ENCODE measurements at regions of chr1 and their contacts with region 1.

Region 1: GRCh38 chr1:89483010-89483756 is 41.4 kb upstream of the LRRC8B start:
- DNase-seq: peak; percentile 65
- H3K4me3 ChIP-seq: no peak overlapping the region
- H3K27ac ChIP-seq: no peak overlapping the region
- H3K4me1 ChIP-seq: peaks cover 0 to 5% of the 10 kb centered on the region in 2 experiments; a peak in 1 of 4 replicates
- H3K27me3 ChIP-seq: no peaks in the 10 kb centered on the region
- CTCF ChIP-seq: peak; percentile 82
- EP300 ChIP-seq: no peak
- RAD21 ChIP-seq: peak; percentile 88

Region 2: DNA sequence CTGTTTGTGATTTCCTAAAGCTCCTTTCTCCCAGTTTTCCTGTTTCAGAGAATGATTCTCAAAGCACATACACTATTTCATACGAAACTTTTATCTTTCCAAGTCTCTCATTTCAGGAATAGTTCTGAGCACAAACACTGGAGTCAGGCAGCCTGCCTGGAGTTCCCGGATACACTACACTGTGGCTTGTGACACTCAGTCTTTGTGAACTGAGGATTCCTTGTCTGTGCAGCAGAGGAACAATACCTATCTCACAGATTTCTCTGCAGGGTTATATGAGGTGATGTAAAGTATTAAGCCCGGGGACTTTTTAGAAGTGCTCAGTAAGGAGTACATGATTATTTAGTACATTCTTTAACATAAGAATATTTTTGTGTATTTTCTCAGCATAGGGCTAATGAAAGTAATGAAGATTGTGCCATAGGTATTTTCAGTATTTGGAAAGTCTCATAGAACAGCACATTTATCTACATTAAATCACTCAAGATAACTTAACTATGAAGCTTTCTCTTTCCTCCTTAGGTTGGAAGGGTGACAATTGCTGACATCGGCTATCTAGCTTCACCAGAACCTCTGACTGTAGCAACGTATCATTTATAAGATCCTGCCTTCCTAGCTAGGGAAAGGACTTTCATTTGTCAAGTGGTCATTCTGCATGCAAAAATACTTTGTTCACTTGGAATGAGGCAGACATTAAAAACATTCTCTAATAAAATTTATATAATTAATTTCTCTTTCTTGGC is 370.1 kb before region 1 on chr1:
- CTCF ChIA-PET with region 1: no interaction called
- POLR2A ChIA-PET with region 1: no interaction called
- DNase-seq: no peak
- H3K4me3 ChIP-seq: no peak overlapping the region
- H3K27ac ChIP-seq: no peak overlapping the region
- H3K4me1 ChIP-seq: no peaks in the 10 kb centered on the region
- H3K27me3 ChIP-seq: no peaks in the 10 kb centered on the region
- CTCF ChIP-seq: no peak
- EP300 ChIP-seq: no peak
- RAD21 ChIP-seq: no peak

Region 3: GRCh38 chr1:89149229-89149628 is 334.0 kb before region 1 on chr1:
- CTCF ChIA-PET with region 1: no interaction called
- POLR2A ChIA-PET with region 1: no interaction called
- DNase-seq: no peak
- H3K4me3 ChIP-seq: no peak overlapping the region
- H3K27ac ChIP-seq: no peak overlapping the region
- H3K4me1 ChIP-seq: peaks cover 0 to 3% of the 10 kb centered on the region in 2 experiments; a peak in 1 of 4 replicates
- H3K27me3 ChIP-seq: no peaks in the 10 kb centered on the region
- CTCF ChIP-seq: peak; percentile 35; the same call in 1 of the 2 replicates
- EP300 ChIP-seq: no peak
- RAD21 ChIP-seq: peak; percentile 48

Region 4: DNA sequence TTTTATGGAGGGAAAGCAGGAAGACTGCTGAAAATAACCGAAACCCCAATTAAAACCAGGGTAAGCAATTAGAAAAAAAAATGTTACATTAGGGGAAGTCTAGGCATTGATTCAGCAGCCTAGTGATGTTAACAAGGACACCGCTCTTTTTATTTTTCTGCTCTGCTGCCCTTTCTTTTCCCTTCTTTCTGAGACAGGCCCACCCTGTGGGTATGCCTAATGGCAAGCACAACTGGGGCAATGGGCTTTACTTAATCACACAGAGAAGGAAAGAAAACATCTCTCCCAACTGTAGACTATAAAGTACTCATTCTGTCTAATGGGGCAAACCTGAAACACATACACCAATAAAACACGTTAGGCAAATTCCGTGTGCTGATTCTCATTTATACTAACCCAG is 49.8 kb before region 1 on chr1:
- CTCF ChIA-PET with region 1: no interaction called
- POLR2A ChIA-PET with region 1: no interaction called
- DNase-seq: no peak
- H3K4me3 ChIP-seq: no peak overlapping the region
- H3K27ac ChIP-seq: no peak overlapping the region
- H3K4me1 ChIP-seq: no peaks in the 10 kb centered on the region
- H3K27me3 ChIP-seq: no peaks in the 10 kb centered on the region
- CTCF ChIP-seq: no peak
- EP300 ChIP-seq: no peak
- RAD21 ChIP-seq: no peak

Region 5: DNA sequence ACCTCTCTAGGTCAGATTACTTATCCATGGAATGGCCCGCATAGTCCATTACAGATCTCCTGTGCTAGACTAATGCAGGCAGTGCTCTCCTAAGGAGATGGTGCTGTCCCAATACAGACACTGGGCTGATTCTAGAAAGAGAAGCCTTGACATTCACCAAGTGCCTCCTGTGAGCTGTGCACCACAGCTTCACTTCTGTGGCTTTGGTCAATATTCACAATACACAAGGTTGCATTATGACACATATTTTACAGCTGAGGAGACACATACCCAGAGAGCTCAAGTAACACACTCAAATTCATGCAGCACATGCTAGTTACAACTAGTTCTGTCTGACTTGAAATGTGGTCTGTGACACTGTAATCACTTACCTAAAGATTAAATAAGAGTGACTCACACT is 18.0 kb before region 1 on chr1:
- CTCF ChIA-PET with region 1: interaction called, 12 read pairs
- POLR2A ChIA-PET with region 1: no interaction called
- DNase-seq: no peak
- H3K4me3 ChIP-seq: no peak overlapping the region
- H3K27ac ChIP-seq: no peak overlapping the region
- H3K4me1 ChIP-seq: no peaks in the 10 kb centered on the region
- H3K27me3 ChIP-seq: no peaks in the 10 kb centered on the region
- CTCF ChIP-seq: no peak
- EP300 ChIP-seq: no peak
- RAD21 ChIP-seq: no peak

Region 6: GRCh38 chr1:89605692-89606091 is 122.5 kb after region 1 on chr1:
- CTCF ChIA-PET with region 1: interaction called, 16 read pairs
- POLR2A ChIA-PET with region 1: no interaction called
- DNase-seq: no peak
- H3K4me3 ChIP-seq: no peak overlapping the region
- H3K27ac ChIP-seq: no peak overlapping the region
- H3K4me1 ChIP-seq: peaks cover 3 to 20% of the 10 kb centered on the region in 2 experiments; a peak in 3 of 4 replicates
- H3K27me3 ChIP-seq: no peaks in the 10 kb centered on the region
- CTCF ChIP-seq: no peak
- EP300 ChIP-seq: peak in 1 of 2 experiments; percentile 36; a peak in 1 of 4 replicates
- RAD21 ChIP-seq: no peak

Region 7: GRCh38 chr1:89615676-89616598 is 132.8 kb after region 1 on chr1:
- CTCF ChIA-PET with region 1: interaction called, 12 read pairs
- POLR2A ChIA-PET with region 1: no interaction called
- DNase-seq: peak; percentile 63
- H3K4me3 ChIP-seq: no peak overlapping the region
- H3K27ac ChIP-seq: peak overlapping the region in 1 of 2 experiments; percentile 77; a peak in 2 of 4 replicates
- H3K4me1 ChIP-seq: peaks cover 0 to 13% of the 10 kb centered on the region in 2 experiments; a peak in 1 of 4 replicates
- H3K27me3 ChIP-seq: no peaks in the 10 kb centered on the region
- CTCF ChIP-seq: peak; percentile 49
- EP300 ChIP-seq: no peak; a peak in 1 of 4 replicates
- RAD21 ChIP-seq: peak; percentile 17

Region 8: GRCh38 chr1:89622895-89623294 is 139.7 kb after region 1 on chr1:
- CTCF ChIA-PET with region 1: interaction called, 30 read pairs
- POLR2A ChIA-PET with region 1: no interaction called
- DNase-seq: peak; percentile 31
- H3K4me3 ChIP-seq: no peak overlapping the region
- H3K27ac ChIP-seq: no peak overlapping the region
- H3K4me1 ChIP-seq: no peaks in the 10 kb centered on the region; a peak in 2 of 4 replicates
- H3K27me3 ChIP-seq: no peaks in the 10 kb centered on the region
- CTCF ChIP-seq: peak; percentile 36
- EP300 ChIP-seq: no peak
- RAD21 ChIP-seq: peak; percentile 61

Measured in SK-N-SH (cell line).